Adrenal gland (tissue), 19 donors: ENCODE measurements at regions of chr1 and their contacts with region 1.

Region 1: GRCh38 chr1:58919959-58920321 is 136.1 kb upstream of the JUN start:
- DNase-seq: no peak
- H3K4me3 ChIP-seq: no peak overlapping the region
- H3K27ac ChIP-seq: no peak overlapping the region
- H3K4me1 ChIP-seq: peaks cover 6 to 11% of the 10 kb centered on the region in 2 donors
- H3K27me3 ChIP-seq: no peaks in the 10 kb centered on the region
- CTCF ChIP-seq: no peak
- POLR2A ChIP-seq: no peak

Region 2: GRCh38 chr1:59046730-59047157 is 126.8 kb after region 1 on chr1:
- intact Hi-C with region 1: loop called in 1 of 2 experiments (anchors 10 kb)
- DNase-seq: no peak
- H3K4me3 ChIP-seq: no peak overlapping the region
- H3K27ac ChIP-seq: no peak overlapping the region
- H3K4me1 ChIP-seq: peaks cover 11 to 15% of the 10 kb centered on the region in 2 donors
- H3K27me3 ChIP-seq: no peaks in the 10 kb centered on the region
- CTCF ChIP-seq: peak in 1 of 6 experiments; percentile 28
- POLR2A ChIP-seq: no peak